ENCODE measurements at regions of chr17 and their contacts with region 1.

Region 1: GRCh38 chr17:7989781-7990655 is 12.4 kb upstream of the GUCY2D start:
- DNase-seq: peak; percentile 94
- H3K4me3 ChIP-seq: peak overlapping the region; percentile 71
- H3K27ac ChIP-seq: peak overlapping the region; percentile 52
- H3K4me1 ChIP-seq: no peaks in the 10 kb centered on the region
- H3K27me3 ChIP-seq: no peaks in the 10 kb centered on the region
- CTCF ChIP-seq: peak; percentile 94

Region 2: GRCh38 chr17:7740481-7741001 is 249.5 kb before region 1 on chr17:
- intact Hi-C with region 1: loop called (anchors 5 kb)
- DNase-seq: no peak
- H3K4me3 ChIP-seq: no peak overlapping the region
- H3K27ac ChIP-seq: no peak overlapping the region
- H3K4me1 ChIP-seq: no peaks in the 10 kb centered on the region
- H3K27me3 ChIP-seq: no peaks in the 10 kb centered on the region
- CTCF ChIP-seq: no peak

Region 3: GRCh38 chr17:7862692-7863437 is 127.2 kb before region 1 on chr17:
- intact Hi-C with region 1: loop called (anchors 2 kb)
- DNase-seq: peak; percentile 69
- H3K4me3 ChIP-seq: no peak overlapping the region
- H3K27ac ChIP-seq: no peak overlapping the region
- H3K4me1 ChIP-seq: peaks cover 10% of the 10 kb centered on the region
- H3K27me3 ChIP-seq: no peaks in the 10 kb centered on the region
- CTCF ChIP-seq: peak; percentile 79

Region 4: DNA sequence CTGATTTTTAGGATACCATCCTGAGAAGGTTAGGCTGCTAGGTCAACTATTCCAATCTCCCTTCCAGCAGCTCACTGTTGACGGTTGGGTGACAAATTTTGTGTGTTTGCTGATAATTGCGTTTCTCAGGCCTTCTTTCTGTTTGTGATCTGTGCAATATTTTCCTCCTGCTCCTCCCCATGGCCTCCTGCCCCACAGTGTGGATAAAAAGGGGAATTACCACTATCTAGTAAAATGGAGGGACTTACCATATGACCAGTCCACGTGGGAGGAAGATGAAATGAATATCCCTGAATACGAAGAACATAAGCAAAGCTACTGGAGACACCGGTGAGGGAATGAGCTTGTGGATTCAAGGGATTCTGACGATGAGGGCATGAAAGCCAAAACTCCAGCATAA is 92.2 kb before region 1 on chr17:
- intact Hi-C with region 1: no loop called
- DNase-seq: no peak
- H3K4me3 ChIP-seq: no peak overlapping the region
- H3K27ac ChIP-seq: no peak overlapping the region
- H3K4me1 ChIP-seq: no peaks in the 10 kb centered on the region
- H3K27me3 ChIP-seq: no peaks in the 10 kb centered on the region
- CTCF ChIP-seq: peak; percentile 42

Region 5: GRCh38 chr17:7912927-7913524 is 77.0 kb before region 1 on chr17:
- intact Hi-C with region 1: loop called (anchors 2 kb)
- DNase-seq: peak; percentile 49
- H3K4me3 ChIP-seq: no peak overlapping the region
- H3K27ac ChIP-seq: no peak overlapping the region
- H3K4me1 ChIP-seq: peaks cover 9% of the 10 kb centered on the region
- H3K27me3 ChIP-seq: no peaks in the 10 kb centered on the region
- CTCF ChIP-seq: peak; percentile 60

Region 6: DNA sequence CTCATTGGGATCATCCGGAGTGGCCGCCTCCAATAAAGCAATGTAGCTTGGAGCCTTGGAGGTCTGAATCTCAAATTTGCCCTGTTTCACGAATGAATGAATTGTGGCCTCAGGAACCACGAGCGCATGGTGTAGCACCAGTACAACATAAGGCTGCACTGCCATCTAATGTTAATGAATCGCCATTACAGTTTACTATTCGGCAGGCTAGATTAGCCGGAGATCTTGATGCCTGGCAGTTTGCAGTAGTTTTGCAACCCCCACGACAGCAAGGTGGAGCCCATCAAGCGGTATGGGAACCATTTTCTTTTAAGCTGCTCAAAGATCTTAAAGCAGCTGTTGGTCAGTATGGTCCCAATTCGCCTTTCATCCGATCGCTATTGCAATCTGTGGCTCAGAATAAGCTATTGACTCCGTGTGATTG is 67.7 kb after region 1 on chr17:
- intact Hi-C with region 1: loop called (anchors 5 kb)
- DNase-seq: peak; percentile 48
- H3K4me3 ChIP-seq: no peak overlapping the region
- H3K27ac ChIP-seq: no peak overlapping the region
- H3K4me1 ChIP-seq: no peaks in the 10 kb centered on the region
- H3K27me3 ChIP-seq: peaks cover 14% of the 10 kb centered on the region
- CTCF ChIP-seq: peak; percentile 47

Measured in colonic mucosa (tissue), 4 donors.